PC-3 (cell line): ENCODE measurements at regions of chr3 and their contacts with region 1.

Region 1: DNA sequence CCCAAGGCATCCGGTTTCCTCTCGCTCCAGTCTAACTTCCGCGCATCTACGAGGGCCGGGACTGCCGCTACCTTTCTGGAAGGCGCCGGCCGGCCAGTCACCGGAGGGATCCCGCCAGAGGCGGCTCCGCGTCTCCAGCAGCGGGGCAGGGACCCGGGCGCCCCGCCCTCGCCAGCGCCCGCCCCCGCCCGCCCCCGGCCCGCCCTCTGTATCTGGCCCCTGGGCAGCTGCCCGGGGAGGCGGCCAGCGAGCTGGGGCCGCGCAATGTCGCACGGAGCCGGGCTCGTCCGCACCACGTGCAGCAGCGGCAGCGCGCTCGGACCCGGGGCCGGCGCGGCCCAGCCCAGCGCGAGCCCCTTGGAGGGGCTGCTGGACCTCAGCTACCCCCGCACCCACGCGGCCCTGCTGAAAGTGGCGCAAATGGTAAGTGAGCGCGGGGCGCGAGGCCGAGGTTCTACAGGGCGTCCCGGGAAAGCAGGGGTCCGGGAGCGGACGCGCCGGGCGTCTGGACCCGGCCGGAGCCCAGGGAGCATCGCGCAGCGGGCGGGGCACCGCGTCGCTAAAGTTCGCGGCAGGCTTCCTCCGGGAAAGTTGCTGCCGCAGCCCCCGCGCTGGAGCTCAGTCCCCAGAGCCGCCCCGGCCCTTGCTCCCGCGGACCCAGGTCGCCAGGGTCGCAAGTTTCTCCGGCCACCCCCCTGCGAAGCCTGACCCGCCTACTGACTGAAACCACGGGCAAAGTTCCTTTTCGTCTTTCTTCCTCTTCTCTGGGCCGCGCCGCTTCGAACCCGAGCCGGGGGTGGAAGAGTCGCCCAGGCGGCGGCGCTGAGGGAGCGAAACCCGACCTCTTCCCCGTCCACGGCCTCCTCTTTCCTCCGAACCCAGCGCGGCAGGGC is at the start of gene CMTM7:
- DNase-seq: peak; percentile 89
- ATAC-seq: peak; percentile 83
- H3K4me3 ChIP-seq: peak within 1 kb of the TSS; percentile 99
- H3K27ac ChIP-seq: peak within 1 kb of the TSS; percentile 77
- H3K4me1 ChIP-seq: peaks cover 27% of the 10 kb centered on the region
- H3K27me3 ChIP-seq: no peaks in the 10 kb centered on the region
- CTCF ChIP-seq: no peak
- total RNA-seq, gene CMTM7: 37.1 and 71.0 TPM in 2 replicates

Region 2: DNA sequence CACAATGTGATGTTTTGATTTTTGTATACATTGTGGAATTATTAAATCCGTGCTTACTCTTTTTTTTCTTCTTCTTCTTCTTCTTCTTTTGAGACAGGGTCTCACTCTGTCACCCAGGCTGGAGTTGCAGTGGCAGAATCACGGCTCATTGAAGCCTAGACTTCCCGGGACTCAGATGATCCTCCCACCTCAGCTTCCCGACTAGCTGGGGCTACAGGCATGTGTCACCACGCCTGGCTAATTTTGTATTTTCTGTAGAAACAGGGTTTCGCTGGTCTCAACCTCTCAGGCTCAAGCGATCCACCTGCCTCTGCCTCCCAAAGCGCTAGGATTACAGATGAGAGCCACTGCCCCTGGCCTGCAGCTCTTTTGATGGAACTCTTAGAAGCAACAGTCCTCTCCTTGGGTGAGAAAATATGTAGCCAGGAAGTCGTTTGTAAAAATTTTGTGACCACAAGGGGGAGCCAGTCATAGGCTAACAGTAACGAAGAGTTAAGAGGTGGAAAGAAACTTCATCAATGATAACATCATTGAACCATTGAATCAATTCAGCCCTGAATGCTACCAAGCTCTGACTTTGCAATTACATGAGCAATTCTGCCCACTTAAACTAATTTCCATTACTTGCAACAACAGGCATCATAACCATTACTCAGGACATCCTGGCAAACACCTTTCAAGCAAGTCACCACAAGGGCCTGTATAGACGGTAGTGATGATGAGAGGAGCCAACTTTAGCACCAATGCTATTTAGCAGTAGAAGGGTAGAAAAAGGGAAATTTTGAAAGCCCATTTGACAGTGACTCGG is 16.9 kb before region 1 on chr3:
- CTCF ChIA-PET with region 1: interaction called, 3 read pairs
- POLR2A ChIA-PET with region 1: interaction called, 3 read pairs
- intact Hi-C with region 1: loop called (anchors 1 kb)
- DNase-seq: peak; percentile 92
- ATAC-seq: peak; percentile 74
- H3K4me3 ChIP-seq: no peak overlapping the region
- H3K27ac ChIP-seq: no peak overlapping the region
- H3K4me1 ChIP-seq: no peaks in the 10 kb centered on the region
- H3K27me3 ChIP-seq: no peaks in the 10 kb centered on the region
- CTCF ChIP-seq: peak; percentile 85